GM23248 (cell line): ENCODE measurements at regions of chr3 and their contacts with region 1.

Region 1: DNA sequence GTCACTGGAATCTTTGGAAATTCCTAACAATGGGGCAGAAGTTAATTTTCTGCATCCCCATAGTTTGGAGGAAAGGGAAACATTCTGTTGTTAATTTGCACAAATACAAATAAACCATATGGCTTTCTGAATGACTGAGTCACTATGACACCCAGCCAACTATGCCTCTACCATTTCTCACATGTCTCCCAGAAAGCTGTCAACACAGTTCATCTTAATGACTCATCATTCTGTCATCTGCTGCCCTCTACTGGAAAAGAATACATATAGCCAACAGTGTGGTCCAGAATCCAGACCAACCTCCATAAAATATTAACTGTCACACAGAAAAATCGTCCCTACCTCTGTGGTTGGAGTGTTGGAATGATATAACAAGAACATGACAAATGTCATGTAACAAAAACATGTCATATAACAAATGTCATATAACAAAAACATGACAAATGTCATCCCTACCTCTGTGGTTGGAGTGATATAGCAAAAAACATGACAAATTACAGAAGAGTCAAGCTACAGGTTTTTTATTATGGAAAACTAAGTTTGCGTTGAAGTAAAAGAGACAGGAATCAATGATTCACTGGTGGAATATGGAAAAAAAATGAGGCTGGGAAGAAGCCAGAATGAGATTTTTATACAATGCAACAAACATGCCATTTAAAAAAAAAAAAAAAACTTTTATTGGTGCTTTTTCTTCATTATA is 47.7 kb upstream of the GYG1 start:
- DNase-seq: peak; percentile 87
- H3K4me3 ChIP-seq: no peak overlapping the region
- H3K27ac ChIP-seq: peak overlapping the region; percentile 46
- H3K4me1 ChIP-seq: peaks cover 13% of the 10 kb centered on the region
- H3K27me3 ChIP-seq: no peaks in the 10 kb centered on the region

Region 2: DNA sequence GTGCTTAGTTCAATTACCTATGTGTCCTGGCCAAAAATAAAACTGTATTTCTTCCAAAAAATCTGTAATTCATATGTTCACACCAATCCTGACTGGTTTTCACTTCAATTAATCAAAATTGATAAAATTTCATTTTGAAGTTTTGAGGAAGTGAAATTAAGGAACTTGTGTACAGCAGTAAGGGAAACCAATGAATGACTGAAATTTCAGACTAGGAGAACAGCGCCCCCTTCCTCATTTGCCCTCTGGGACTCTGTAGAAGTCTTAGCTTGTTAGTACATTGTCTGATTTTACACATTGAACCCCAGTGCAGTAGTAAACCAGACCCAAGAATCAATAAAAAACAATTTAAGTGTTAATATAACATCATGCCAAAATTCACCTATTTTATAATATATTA is 741.3 kb before region 1 on chr3:
- in situ Hi-C with region 1: no loop called
- DNase-seq: no peak
- H3K4me3 ChIP-seq: no peak overlapping the region
- H3K27ac ChIP-seq: no peak overlapping the region
- H3K4me1 ChIP-seq: peaks cover 31% of the 10 kb centered on the region
- H3K27me3 ChIP-seq: no peaks in the 10 kb centered on the region

Region 3: DNA sequence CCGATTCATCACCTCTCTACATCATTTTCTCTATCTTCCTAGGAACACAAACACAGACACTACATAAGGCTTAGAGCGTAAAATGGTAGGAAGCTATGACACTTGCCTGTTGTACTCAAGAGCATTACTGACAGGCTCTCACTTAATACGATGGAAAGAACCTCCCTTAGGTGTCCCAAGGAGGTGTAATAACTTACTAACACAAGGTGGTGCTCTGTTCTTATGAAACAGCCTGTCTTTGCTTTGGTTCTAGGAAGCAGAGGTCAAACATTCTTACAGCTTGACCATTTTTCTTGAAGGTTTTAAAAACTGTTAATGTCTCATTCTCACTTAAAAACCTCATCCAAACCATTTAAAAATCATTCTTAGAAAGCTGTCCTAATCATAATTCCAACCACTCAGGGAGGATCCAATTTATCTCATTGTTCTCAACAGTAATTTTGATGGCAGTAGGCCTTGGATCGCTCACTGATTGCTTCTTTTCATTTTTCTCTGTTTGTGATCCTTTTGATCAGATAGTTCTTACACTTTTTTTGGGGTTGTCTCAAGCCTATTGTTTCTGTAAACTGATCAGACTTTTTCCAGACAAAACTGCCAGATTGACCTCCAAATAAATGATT is 563.8 kb before region 1 on chr3:
- in situ Hi-C with region 1: loop called (anchors 10 kb)
- DNase-seq: peak; percentile 80
- H3K4me3 ChIP-seq: no peak overlapping the region
- H3K27ac ChIP-seq: no peak overlapping the region
- H3K4me1 ChIP-seq: no peaks in the 10 kb centered on the region
- H3K27me3 ChIP-seq: no peaks in the 10 kb centered on the region

Region 4: DNA sequence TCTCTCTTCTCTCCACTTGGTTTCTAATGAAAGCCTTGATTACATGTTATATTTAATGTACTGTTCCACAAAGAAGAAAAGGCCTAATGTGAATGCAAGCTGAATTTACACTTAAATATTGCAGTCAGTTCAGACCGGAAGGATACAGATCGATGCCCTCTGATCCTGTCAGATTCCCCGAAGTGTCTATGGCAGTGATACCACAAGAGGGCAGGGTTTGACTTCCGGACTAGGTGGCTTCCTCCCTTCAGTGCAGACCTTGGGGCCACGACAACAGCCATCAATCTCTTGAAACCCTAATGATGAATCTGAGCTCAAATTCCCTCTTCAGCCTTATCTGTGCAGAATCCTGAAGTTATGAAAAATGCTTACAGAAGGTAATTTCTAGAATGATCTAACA is 216.4 kb before region 1 on chr3:
- in situ Hi-C with region 1: loop called (anchors 10 kb)
- DNase-seq: peak; percentile 52
- H3K4me3 ChIP-seq: no peak overlapping the region
- H3K27ac ChIP-seq: no peak overlapping the region
- H3K4me1 ChIP-seq: peaks cover 23% of the 10 kb centered on the region
- H3K27me3 ChIP-seq: no peaks in the 10 kb centered on the region

Region 5: DNA sequence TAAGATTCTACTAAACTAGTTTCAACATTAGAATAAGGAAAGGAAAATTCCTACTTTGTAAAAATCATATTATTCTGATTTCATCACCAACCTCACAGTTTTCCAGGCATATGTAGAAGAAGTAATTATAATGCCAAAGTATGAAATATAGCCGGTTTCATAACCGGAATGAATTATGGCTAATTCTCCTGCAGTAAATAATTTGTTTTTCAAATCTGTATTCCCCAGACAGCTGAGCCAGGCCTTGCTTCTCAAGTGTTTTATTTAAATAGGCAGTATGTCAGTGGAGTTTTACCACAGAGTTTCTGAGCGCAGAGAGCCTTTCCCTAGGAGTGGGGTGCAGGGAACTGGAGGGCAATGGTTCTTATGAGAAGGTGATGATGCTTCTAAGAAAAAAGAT is 87.3 kb before region 1 on chr3:
- in situ Hi-C with region 1: loop called (anchors 5 kb)
- DNase-seq: no peak
- H3K4me3 ChIP-seq: no peak overlapping the region
- H3K27ac ChIP-seq: no peak overlapping the region
- H3K4me1 ChIP-seq: 0 out of 2 replicates have a peak, but pooled peaks cover 4% of the 10 kb centered on the region
- H3K27me3 ChIP-seq: no peaks in the 10 kb centered on the region